MCF 10A (cell line): ENCODE measurements at regions of chr10 and their contacts with region 1.

Region 1: DNA sequence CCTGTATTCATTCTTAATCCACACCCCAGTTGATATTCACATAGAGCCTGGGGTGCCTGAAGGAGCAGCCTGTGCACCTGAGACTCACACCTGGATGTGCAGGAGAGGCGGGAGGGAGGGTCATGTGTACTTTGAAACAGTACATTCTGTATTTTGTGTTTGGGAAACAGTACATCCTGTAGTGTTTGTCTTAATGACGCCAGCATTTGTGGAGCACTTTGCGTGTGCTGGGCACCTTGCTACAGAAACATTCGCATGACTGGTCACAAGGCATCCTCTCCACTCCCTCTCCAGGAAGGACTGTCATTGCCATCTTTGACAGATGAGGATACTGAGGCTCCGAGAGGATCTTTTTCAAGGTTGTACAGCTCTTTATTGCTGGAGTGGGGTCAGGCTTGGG is 132.1 kb downstream of the TACC2 start:
- DNase-seq: peak; percentile 77
- H3K4me3 Mint-ChIP-seq: peak overlapping the region; percentile 28
- H3K27ac Mint-ChIP-seq: peak overlapping the region; percentile 92
- H3K4me1 Mint-ChIP-seq: peaks cover 35% of the 10 kb centered on the region
- H3K27me3 Mint-ChIP-seq: no peaks in the 10 kb centered on the region
- CTCF ChIP-seq: no peak

Region 2: DNA sequence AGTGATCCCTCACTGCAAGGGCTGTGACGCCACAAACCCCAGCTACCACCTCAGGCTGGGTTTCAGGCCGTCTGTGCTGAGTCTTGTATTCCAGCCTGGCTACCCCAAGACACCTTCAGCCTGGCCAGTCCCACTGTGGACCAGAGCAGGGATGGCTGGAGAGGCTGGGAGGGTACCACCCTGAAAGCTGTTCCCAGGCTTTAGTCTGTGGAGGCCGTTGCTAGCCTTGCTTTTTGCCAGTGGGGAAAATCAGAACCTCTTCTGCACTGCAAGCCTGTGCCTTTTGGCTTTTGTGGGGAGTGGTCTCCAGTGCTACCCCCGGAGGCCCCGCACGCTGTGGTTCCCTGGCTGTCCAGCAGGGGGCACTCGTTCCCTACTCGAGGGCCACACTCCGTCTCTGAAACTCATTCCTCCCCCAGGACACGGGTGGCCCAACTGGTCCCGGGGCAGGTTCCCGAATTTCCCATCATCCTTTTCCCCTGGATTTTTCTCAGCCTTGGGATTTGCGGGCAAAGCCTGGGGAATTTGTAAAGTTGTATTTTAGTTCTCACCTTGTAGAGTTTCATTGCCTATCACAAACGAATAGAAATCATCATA is 21.7 kb after region 1 on chr10:
- CTCF ChIA-PET with region 1: interaction called, 8 read pairs
- POLR2A ChIA-PET with region 1: interaction called, 49 read pairs
- intact Hi-C with region 1: no loop called
- DNase-seq: no peak
- H3K4me3 Mint-ChIP-seq: no peak overlapping the region
- H3K27ac Mint-ChIP-seq: peak overlapping the region; percentile 59
- H3K4me1 Mint-ChIP-seq: peaks cover 39% of the 10 kb centered on the region
- H3K27me3 Mint-ChIP-seq: no peaks in the 10 kb centered on the region
- CTCF ChIP-seq: peak; percentile 99